ENCODE measurements at regions of chr2 and their contacts with region 1.

Region 1: GRCh38 chr2:151649966-151650365 is 84.3 kb downstream of the NEB start:
- DNase-seq: no peak
- H3K4me3 ChIP-seq: no peak overlapping the region
- H3K27ac ChIP-seq: no peak overlapping the region
- H3K4me1 ChIP-seq: no peaks in the 10 kb centered on the region
- H3K27me3 ChIP-seq: no peaks in the 10 kb centered on the region
- CTCF ChIP-seq: no peak
- EP300 ChIP-seq: no peak
- POLR2A ChIP-seq: no peak
- RAD21 ChIP-seq: no peak

Region 2: GRCh38 chr2:151638191-151638933 is 11.6 kb before region 1 on chr2:
- CTCF ChIA-PET with region 1: interaction called, 11 read pairs
- POLR2A ChIA-PET with region 1: no interaction called
- DNase-seq: no peak
- H3K4me3 ChIP-seq: no peak overlapping the region
- H3K27ac ChIP-seq: no peak overlapping the region
- H3K4me1 ChIP-seq: no peaks in the 10 kb centered on the region
- H3K27me3 ChIP-seq: no peaks in the 10 kb centered on the region
- CTCF ChIP-seq: no peak
- EP300 ChIP-seq: no peak
- POLR2A ChIP-seq: no peak
- RAD21 ChIP-seq: no peak